ENCODE measurements at regions of chr2 and their contacts with region 1.

Region 1: DNA sequence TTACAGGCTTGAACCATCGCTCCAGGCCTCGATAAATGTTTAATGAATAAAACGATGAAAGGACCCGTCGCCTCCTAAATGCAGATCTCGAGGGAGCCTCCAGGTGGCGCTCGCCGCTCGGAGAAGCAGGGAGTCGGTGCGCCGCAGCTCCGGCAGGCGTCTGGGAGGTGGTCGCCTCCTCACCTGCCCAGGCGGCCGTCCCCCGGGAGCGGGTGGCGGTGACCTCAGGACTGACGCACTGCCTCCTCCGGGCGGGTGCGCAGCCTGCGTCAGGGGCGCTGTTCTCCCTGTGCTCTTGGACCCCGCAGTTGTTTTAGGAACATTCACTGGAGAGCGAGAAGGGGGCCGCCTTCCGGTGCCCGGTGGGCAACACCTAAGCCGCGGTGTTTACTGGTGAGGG is 38.6 kb upstream of the POLE4 start:
- DNase-seq: peak; percentile 75 to 84
- H3K4me3 ChIP-seq: peak overlapping the region; percentile 30
- H3K4me3 Mint-ChIP-seq: peak overlapping the region; percentile 45
- H3K27ac Mint-ChIP-seq: no peak overlapping the region
- H3K4me1 ChIP-seq: peaks cover 18% of the 10 kb centered on the region
- H3K4me1 Mint-ChIP-seq: peaks cover 30% of the 10 kb centered on the region
- H3K27me3 ChIP-seq: no peaks in the 10 kb centered on the region
- H3K27me3 Mint-ChIP-seq: no peaks in the 10 kb centered on the region
- CTCF ChIP-seq: peak; percentile 72 to 89

Region 2: GRCh38 chr2:74696829-74697228 is 223.0 kb before region 1 on chr2:
- CTCF ChIA-PET with region 1: no interaction called
- POLR2A ChIA-PET with region 1: no interaction called
- intact Hi-C with region 1: no loop called
- DNase-seq: peak in 1 of 2 experiments; percentile 10
- H3K4me3 ChIP-seq: no peak overlapping the region
- H3K4me3 Mint-ChIP-seq: no peak overlapping the region
- H3K27ac Mint-ChIP-seq: no peak overlapping the region
- H3K4me1 ChIP-seq: peaks cover 13% of the 10 kb centered on the region
- H3K4me1 Mint-ChIP-seq: peaks cover under 1% of the 10 kb centered on the region
- H3K27me3 ChIP-seq: no peaks in the 10 kb centered on the region; the same call in 1 of the 2 replicates
- H3K27me3 Mint-ChIP-seq: peaks cover 4% of the 10 kb centered on the region
- CTCF ChIP-seq: no peak

Region 3: DNA sequence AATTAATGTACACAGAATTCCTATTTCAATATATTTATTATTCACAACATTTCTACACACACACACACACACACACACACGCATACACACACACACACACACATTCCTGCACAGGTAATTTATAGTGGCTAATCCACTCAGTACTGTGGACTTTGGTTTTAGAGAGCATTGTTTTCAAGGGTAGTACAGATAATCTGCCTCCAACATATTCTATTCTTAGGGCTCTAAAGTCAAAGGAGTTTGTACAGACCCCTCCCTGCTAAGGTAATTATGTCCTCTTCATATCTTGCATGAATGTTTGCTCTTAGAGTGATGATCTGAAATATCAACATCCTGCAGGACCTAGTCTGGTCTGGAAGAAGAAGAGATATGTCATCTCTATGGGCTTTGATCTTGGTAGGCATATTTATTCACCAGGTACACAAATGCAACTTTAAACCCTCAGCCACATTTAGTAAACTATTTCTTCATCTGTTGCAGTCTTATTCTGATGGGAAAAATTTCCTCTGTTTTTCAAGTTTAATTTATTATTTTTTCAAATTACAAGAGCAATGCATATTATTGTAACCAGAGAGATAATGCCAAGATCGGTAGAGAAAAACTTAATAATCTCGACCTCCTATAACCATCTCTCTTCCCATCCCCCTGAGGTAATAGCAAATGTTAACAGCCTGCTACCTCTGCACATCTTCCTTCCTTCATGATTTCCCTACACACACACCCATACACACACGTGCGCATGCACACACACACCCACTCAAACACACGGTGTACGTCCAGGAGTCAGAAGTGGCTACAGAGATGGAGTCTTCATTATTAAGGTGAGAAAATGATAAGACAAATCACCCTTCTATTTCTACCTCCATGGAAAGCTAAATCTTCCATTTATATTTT is 20.3 kb after region 1 on chr2:
- CTCF ChIA-PET with region 1: interaction called, 3 read pairs
- POLR2A ChIA-PET with region 1: no interaction called
- intact Hi-C with region 1: loop called (anchors 2 kb)
- DNase-seq: peak; percentile 67 to 68
- H3K4me3 ChIP-seq: no peak overlapping the region
- H3K4me3 Mint-ChIP-seq: peak overlapping the region; percentile 20
- H3K27ac Mint-ChIP-seq: peak overlapping the region; percentile 3
- H3K4me1 ChIP-seq: peaks cover 40% of the 10 kb centered on the region
- H3K4me1 Mint-ChIP-seq: peaks cover 30% of the 10 kb centered on the region
- H3K27me3 ChIP-seq: no peaks in the 10 kb centered on the region
- H3K27me3 Mint-ChIP-seq: no peaks in the 10 kb centered on the region
- CTCF ChIP-seq: no peak

Region 4: DNA sequence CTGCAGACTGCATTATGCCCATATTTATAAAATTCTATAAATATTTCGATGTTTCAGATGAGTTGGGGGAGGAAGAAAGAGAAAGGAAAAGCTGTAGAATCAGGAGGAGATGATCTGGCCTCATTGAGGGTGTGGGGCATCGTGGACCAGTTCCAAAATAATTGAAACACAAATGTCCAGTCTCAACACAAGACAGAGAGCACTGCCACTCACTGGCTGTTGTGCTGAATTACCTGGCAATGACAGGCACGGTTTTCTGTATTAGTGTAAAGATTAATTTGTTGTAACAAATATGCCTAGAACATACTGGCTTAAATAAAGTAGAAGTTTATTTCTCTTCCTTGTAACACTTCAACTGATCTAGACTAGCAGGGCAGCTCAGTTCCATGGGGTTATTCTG is 62.8 kb after region 1 on chr2:
- CTCF ChIA-PET with region 1: interaction called, 3 read pairs
- POLR2A ChIA-PET with region 1: interaction called, 3 read pairs
- intact Hi-C with region 1: loop called (anchors 1 kb)
- DNase-seq: no peak
- H3K4me3 ChIP-seq: no peak overlapping the region
- H3K4me3 Mint-ChIP-seq: no peak overlapping the region
- H3K27ac Mint-ChIP-seq: no peak overlapping the region
- H3K4me1 ChIP-seq: no peaks in the 10 kb centered on the region
- H3K4me1 Mint-ChIP-seq: no peaks in the 10 kb centered on the region
- H3K27me3 ChIP-seq: no peaks in the 10 kb centered on the region
- H3K27me3 Mint-ChIP-seq: no peaks in the 10 kb centered on the region
- CTCF ChIP-seq: peak in 1 of 2 experiments; percentile 39

Region 5: GRCh38 chr2:75064691-75065396 is 145.0 kb after region 1 on chr2:
- CTCF ChIA-PET with region 1: no interaction called
- POLR2A ChIA-PET with region 1: no interaction called
- intact Hi-C with region 1: loop called (anchors 5 kb)
- DNase-seq: peak; percentile 59 to 79
- H3K4me3 ChIP-seq: no peak overlapping the region
- H3K4me3 Mint-ChIP-seq: no peak overlapping the region
- H3K27ac Mint-ChIP-seq: no peak overlapping the region
- H3K4me1 ChIP-seq: no peaks in the 10 kb centered on the region
- H3K4me1 Mint-ChIP-seq: peaks cover 5% of the 10 kb centered on the region
- H3K27me3 ChIP-seq: no peaks in the 10 kb centered on the region
- H3K27me3 Mint-ChIP-seq: no peaks in the 10 kb centered on the region
- CTCF ChIP-seq: peak; percentile 91 to 92

Region 6: GRCh38 chr2:75403991-75404428 is 484.2 kb after region 1 on chr2:
- CTCF ChIA-PET with region 1: no interaction called
- POLR2A ChIA-PET with region 1: no interaction called
- intact Hi-C with region 1: loop called (anchors 1 kb)
- DNase-seq: peak in 1 of 2 experiments; percentile 51
- H3K4me3 ChIP-seq: no peak overlapping the region
- H3K4me3 Mint-ChIP-seq: no peak overlapping the region
- H3K27ac Mint-ChIP-seq: no peak overlapping the region
- H3K4me1 ChIP-seq: no peaks in the 10 kb centered on the region
- H3K4me1 Mint-ChIP-seq: peaks cover 6% of the 10 kb centered on the region
- H3K27me3 ChIP-seq: no peaks in the 10 kb centered on the region; the same call in 1 of the 2 replicates
- H3K27me3 Mint-ChIP-seq: peaks cover 16% of the 10 kb centered on the region
- CTCF ChIP-seq: peak; percentile 72 to 82

Measured in Caco-2 (cell line).